HepG2 (cell line): ENCODE measurements at regions of chr2 and their contacts with region 1.

Region 1: DNA sequence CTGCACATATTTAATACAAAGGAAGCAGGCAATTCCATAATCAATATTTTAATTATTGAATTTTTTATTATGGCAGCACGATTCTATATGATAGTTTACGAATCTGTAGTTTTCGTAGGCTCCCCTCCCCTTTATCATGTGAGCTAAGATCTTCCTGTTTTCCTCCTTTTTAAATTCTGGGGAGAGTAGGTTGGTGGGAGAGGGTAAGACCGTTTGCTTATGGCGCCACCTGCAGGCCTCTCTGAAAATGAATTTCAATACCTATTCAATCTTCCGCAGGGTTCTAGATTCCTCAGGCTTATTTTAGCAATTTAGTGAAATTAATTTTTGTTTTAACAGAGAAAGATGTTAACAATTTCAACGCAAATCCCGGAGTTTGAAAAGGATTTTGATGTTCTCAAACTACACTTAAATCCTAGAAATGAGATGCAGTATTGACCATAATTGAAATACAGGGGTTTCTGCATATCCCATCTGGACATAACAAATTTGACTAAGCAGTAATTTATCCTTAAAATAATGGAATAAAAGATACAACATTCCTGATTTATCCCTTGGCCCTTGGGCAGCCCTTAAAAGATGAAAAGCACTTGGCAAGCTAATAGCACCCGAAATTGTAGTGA is 12.8 kb upstream of the GBX2 start:
- DNase-seq: peak; percentile 60
- ATAC-seq: peak; percentile 28; the same call in 2 of the 3 replicates
- H3K4me3 ChIP-seq: no peak overlapping the region
- H3K27ac ChIP-seq: no peak overlapping the region
- H3K4me1 ChIP-seq: 0 out of 2 replicates have a peak, but pooled peaks cover 9% of the 10 kb centered on the region
- H3K27me3 ChIP-seq: peaks cover 0 to 34% of the 10 kb centered on the region in 2 experiments; a peak in 3 of 5 replicates
- CTCF ChIP-seq: peak; percentile 79
- EP300 ChIP-seq: no peak
- POLR2A ChIP-seq: no peak
- RAD21 ChIP-seq: 0 out of 2 replicates have a peak, but pooled peaks have one; percentile 35

Region 2: GRCh38 chr2:235766278-235766677 is 414.7 kb before region 1 on chr2:
- CTCF ChIA-PET with region 1: interaction called, 12 read pairs
- POLR2A ChIA-PET with region 1: no interaction called
- in situ Hi-C with region 1: no loop called
- intact Hi-C with region 1: loop called (anchors 1 kb)
- DNase-seq: peak; percentile 70
- ATAC-seq: peak; percentile 93
- H3K4me3 ChIP-seq: no peak overlapping the region
- H3K27ac ChIP-seq: peak overlapping the region; percentile 9
- H3K4me1 ChIP-seq: peaks cover 18% of the 10 kb centered on the region
- H3K27me3 ChIP-seq: no peaks in the 10 kb centered on the region
- CTCF ChIP-seq: peak; percentile 85
- EP300 ChIP-seq: no peak
- POLR2A ChIP-seq: no peak
- RAD21 ChIP-seq: peak; percentile 60

Region 3: GRCh38 chr2:235779444-235779896 is 401.5 kb before region 1 on chr2:
- CTCF ChIA-PET with region 1: interaction called, 39 read pairs
- POLR2A ChIA-PET with region 1: no interaction called
- in situ Hi-C with region 1: loop called (anchors 5 kb)
- intact Hi-C with region 1: loop called (anchors 1 kb)
- DNase-seq: peak; percentile 68
- ATAC-seq: peak; percentile 97
- H3K4me3 ChIP-seq: no peak overlapping the region
- H3K27ac ChIP-seq: no peak overlapping the region
- H3K4me1 ChIP-seq: no peaks in the 10 kb centered on the region
- H3K27me3 ChIP-seq: no peaks in the 10 kb centered on the region
- CTCF ChIP-seq: peak; percentile 98
- EP300 ChIP-seq: no peak
- POLR2A ChIP-seq: no peak
- RAD21 ChIP-seq: peak; percentile 87

Region 4: GRCh38 chr2:235936493-235936892 is 244.4 kb before region 1 on chr2:
- CTCF ChIA-PET with region 1: interaction called, 18 read pairs
- POLR2A ChIA-PET with region 1: no interaction called
- in situ Hi-C with region 1: no loop called
- intact Hi-C with region 1: loop called (anchors 1 kb)
- DNase-seq: peak; percentile 25
- ATAC-seq: no peak
- H3K4me3 ChIP-seq: no peak overlapping the region
- H3K27ac ChIP-seq: no peak overlapping the region
- H3K4me1 ChIP-seq: peaks cover 8% of the 10 kb centered on the region; the same call in 1 of the 2 replicates
- H3K27me3 ChIP-seq: no peaks in the 10 kb centered on the region
- CTCF ChIP-seq: peak; percentile 66
- EP300 ChIP-seq: no peak
- POLR2A ChIP-seq: no peak
- RAD21 ChIP-seq: no peak

Region 5: GRCh38 chr2:236054125-236054524 is 126.8 kb before region 1 on chr2:
- CTCF ChIA-PET with region 1: no interaction called
- POLR2A ChIA-PET with region 1: no interaction called
- in situ Hi-C with region 1: no loop called
- intact Hi-C with region 1: no loop called
- DNase-seq: no peak
- ATAC-seq: no peak
- H3K4me3 ChIP-seq: no peak overlapping the region
- H3K27ac ChIP-seq: no peak overlapping the region
- H3K4me1 ChIP-seq: no peaks in the 10 kb centered on the region
- H3K27me3 ChIP-seq: no peaks in the 10 kb centered on the region
- CTCF ChIP-seq: no peak
- EP300 ChIP-seq: no peak
- POLR2A ChIP-seq: no peak
- RAD21 ChIP-seq: no peak